Dorsolateral prefrontal cortex (tissue), 120 donors: ENCODE measurements at regions of chr4 and their contacts with region 1.

Region 1: DNA sequence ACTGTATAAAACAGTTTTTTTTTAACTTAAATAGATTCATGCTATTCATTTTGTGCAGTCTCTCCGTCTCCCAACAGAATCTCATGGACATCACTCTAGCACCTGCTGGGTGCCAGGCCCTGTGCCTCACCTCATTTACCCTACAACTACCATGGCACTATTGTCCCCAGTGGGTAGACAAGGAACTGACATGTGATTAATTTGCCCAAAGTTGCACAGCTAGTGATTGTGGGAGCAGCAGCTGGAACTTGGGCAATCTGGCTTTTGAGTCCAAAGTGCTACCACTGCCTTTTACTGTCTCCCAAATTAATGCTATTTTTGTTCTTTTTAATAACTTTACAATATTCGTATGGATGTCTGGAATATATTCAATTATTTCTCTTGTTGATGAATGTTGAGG is 11.2 kb upstream of the PGRMC2 start:
- DNase-seq: no peak
- H3K4me3 ChIP-seq: no peak overlapping the region
- H3K27ac ChIP-seq: no peak overlapping the region
- H3K27me3 ChIP-seq: no peaks in the 10 kb centered on the region
- CTCF ChIP-seq: no peak

Region 2: GRCh38 chr4:128524311-128524710 is 225.5 kb after region 1 on chr4:
- intact Hi-C with region 1: no loop called
- DNase-seq: no peak
- H3K4me3 ChIP-seq: no peak overlapping the region
- H3K27ac ChIP-seq: no peak overlapping the region
- H3K27me3 ChIP-seq: no peaks in the 10 kb centered on the region
- CTCF ChIP-seq: no peak

Region 3: GRCh38 chr4:129093191-129093920 is 794.5 kb after region 1 on chr4 and contains the start of gene SCLT1:
- intact Hi-C with region 1: loop called in 1 of 2 experiments (anchors 10 kb)
- DNase-seq: peak; percentile 95 to 99 (median 98)
- H3K4me3 ChIP-seq: peak within 1 kb of the TSS; percentile 56 to 98 (median 85)
- H3K27ac ChIP-seq: peak within 1 kb of the TSS; percentile 16 to 98 (median 91)
- H3K27me3 ChIP-seq: no peaks in the 10 kb centered on the region
- CTCF ChIP-seq: peak in 20 of 56 donors; percentile 3 to 33 (median 17)
- total RNA-seq, gene SCLT1: 14.7 to 32.2 (median 21.4) TPM